Endothelial cell of umbilical vein (primary cell): ENCODE measurements at regions of chr13 and their contacts with region 1.

Region 1: DNA sequence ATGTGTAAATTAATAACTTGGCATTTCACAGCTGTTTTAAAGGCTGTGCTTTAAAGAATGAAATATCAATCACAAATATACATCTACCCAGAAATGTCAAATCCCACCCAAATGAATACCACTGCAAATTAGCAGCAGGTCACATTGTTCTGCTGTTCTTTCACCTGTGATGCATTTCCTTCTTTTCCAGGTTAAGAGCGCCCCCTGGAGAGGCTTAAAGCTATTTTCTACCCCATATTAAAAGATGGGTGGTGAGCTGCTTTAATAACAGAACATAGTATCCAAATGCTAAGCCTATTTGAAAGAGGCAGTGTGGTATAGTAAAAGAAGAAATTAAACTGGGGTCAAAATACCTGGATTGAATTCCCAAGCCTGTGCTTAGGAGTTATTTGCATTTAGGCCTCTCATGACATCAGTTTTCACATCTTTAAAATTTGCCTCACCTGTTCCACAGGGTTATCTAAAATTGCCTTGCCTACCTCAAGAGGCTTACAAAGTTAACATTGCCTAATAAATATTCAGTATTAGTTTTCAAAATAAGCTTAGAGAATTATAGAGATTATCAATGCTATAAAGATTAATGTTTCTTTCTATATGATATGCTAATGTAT is 396.9 kb upstream of the SLITRK5 start:
- DNase-seq: no peak
- H3K4me3 ChIP-seq: no peak overlapping the region
- H3K27ac ChIP-seq: no peak overlapping the region
- H3K4me1 ChIP-seq: no peaks in the 10 kb centered on the region
- H3K27me3 ChIP-seq: no peaks in the 10 kb centered on the region
- CTCF ChIP-seq: no peak
- POLR2A ChIP-seq: no peak

Region 2: DNA sequence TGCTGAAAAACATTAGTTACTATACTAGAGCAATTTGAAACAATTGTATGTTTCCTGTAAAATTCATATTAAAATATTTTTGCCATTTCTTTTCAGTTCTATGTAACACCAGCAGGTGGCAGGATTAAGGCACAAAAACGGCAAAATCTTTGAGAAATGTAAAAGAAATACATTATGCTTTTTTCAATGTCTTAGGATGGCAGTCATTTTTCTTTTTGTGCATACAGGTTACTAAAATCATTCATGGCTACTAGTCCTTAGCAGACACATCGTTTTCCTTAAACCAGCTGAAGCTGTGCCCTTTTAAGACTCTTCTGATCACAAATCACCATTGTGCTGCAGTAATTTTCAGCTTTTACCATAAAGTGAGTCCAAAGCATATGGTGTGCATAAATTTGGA is 403.9 kb before region 1 on chr13:
- CTCF ChIA-PET with region 1: interaction called, 4 read pairs
- POLR2A ChIA-PET with region 1: no interaction called
- dilution Hi-C with region 1: no loop called
- intact Hi-C with region 1: loop called (anchors 2 kb)
- DNase-seq: peak; percentile 4
- H3K4me3 ChIP-seq: no peak overlapping the region
- H3K27ac ChIP-seq: no peak overlapping the region
- H3K4me1 ChIP-seq: no peaks in the 10 kb centered on the region
- H3K27me3 ChIP-seq: no peaks in the 10 kb centered on the region
- CTCF ChIP-seq: peak in 1 of 2 donors; percentile 13
- POLR2A ChIP-seq: no peak